ENCODE measurements at regions of chr9 and their contacts with region 1.

Region 1: DNA sequence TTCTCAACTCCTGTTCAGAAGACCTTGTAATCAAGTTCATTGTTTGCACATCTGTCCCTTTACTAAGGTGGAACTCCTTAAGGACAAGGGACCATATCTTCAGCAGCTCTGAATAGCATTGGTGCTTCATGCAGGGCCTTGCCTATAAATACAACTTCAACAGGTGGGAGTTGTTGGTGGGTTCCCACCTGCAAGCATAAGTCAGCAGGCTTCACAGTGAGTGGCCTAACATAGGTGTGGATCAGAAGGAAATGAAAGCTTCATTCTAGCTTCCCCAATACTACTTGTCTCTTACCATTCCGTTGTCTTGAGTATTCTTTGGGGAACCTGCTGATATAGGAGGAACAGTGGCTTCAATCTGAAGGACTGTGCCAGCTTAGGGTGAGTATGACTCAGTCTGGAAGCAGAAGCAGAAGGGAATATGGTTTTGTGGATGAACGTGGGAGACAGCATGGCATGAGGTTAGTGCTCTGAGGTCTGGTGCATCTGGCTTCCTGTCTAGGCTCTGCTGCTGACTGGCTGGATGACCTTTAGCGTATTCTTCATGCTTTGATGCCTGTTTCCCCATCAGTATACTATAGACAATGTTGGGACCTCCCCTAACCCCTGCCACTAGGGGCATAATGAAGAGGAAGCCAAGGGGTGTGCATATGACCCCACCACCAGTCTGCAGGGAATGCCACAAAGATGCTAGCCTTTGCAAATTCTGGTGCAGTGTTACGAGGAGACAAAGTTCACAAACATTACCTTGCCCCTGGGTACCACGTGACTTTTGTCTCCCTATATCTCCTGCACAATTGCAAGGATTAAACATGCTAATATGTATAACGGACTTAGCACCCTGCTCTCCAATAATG is 192.3 kb downstream of the PALM2AKAP2 start:
- DNase-seq: peak; percentile 47
- ATAC-seq: peak; percentile 33
- H3K4me3 Mint-ChIP-seq: no peak overlapping the region
- H3K27ac Mint-ChIP-seq: peak overlapping the region; percentile 75
- H3K4me1 Mint-ChIP-seq: peaks cover 90% of the 10 kb centered on the region
- H3K27me3 Mint-ChIP-seq: no peaks in the 10 kb centered on the region

Region 2: GRCh38 chr9:109887079-109887478 is 85.2 kb before region 1 on chr9:
- CTCF ChIA-PET with region 1: interaction called, 3 read pairs
- POLR2A ChIA-PET with region 1: no interaction called
- intact Hi-C with region 1: loop called (anchors 1 to 2 kb)
- DNase-seq: no peak
- ATAC-seq: peak; percentile 48
- H3K4me3 Mint-ChIP-seq: no peak overlapping the region
- H3K27ac Mint-ChIP-seq: peak overlapping the region; percentile 88
- H3K4me1 Mint-ChIP-seq: peaks cover 45% of the 10 kb centered on the region
- H3K27me3 Mint-ChIP-seq: no peaks in the 10 kb centered on the region

Region 3: DNA sequence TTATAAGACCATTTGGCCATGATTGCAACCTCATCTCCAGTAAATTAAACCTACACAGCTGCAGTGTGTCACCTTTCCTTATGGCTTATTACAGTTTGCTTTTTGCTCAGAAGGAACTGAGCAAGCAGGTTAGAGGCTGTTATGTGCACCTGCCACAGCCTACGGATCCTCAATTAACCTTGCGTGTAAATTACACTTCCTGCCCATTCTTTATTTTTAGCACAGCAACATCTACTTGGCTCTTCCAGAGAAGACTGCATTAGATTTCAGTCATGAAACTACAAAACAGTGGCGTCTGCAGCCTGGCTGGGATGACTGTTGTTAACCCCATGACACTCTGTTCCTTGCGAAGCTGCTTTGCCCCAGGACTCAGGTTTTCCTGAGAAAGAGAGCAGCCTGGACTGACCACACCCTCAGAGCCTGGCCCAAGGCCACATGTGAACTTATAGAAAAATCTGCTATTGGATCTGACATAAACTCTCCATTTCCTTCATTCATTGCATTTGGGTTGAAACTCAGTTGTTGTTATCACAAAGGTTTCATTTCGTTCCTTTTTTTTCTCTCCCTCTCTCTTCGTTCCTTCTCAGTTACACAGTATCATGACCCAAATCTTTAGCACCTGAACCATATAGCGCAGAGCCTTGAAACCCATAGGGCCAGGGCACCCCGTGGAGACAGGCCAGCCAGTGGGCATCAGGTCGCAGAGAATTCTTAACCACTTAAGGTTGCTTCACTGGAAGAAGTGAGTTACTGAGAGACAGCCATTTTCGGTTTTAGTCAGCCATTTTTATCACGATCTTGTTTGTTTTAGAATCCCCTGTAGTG is 53.7 kb before region 1 on chr9:
- CTCF ChIA-PET with region 1: interaction called, 4 read pairs
- POLR2A ChIA-PET with region 1: interaction called, 4 read pairs
- intact Hi-C with region 1: loop called (anchors 1 kb)
- DNase-seq: peak; percentile 65
- ATAC-seq: peak; percentile 87
- H3K4me3 Mint-ChIP-seq: peak overlapping the region; percentile 58
- H3K27ac Mint-ChIP-seq: peak overlapping the region; percentile 99
- H3K4me1 Mint-ChIP-seq: peaks cover 34% of the 10 kb centered on the region
- H3K27me3 Mint-ChIP-seq: no peaks in the 10 kb centered on the region

Region 4: DNA sequence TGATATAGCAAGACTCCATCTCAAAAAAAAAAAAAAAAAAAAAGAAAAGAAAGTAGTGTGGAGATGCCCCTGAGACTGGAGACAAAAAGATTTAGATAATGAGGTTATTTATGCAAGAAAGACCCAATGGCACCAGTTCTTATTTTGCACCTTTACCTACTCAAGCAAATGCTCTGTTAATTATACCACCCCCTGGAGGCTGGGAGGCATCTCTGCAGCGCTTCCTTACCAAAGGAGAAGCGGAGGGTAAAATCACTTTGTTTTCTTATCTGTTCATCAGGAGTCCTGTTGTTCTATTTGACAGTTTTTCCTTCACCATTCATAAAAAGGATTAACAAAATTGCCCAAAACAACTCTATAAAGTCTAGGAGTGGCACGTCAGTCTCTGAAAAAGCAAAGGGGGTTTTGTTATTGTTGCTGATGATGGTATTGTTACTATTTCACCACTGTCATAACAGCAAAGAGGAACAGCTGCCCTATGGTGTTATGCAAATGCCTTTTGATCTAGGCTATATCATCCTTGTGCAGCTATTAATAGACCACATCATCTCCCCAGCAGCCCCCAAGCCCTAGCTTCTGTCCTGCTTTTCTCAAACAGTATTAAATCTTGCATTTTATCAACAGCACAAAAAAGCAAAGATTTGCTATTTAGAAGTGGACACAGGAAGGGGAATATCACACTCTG is 18.3 kb before region 1 on chr9:
- CTCF ChIA-PET with region 1: interaction called, 17 read pairs
- POLR2A ChIA-PET with region 1: interaction called, 6 read pairs
- intact Hi-C with region 1: loop called (anchors 1 kb)
- DNase-seq: no peak
- ATAC-seq: no peak
- H3K4me3 Mint-ChIP-seq: no peak overlapping the region
- H3K27ac Mint-ChIP-seq: no peak overlapping the region
- H3K4me1 Mint-ChIP-seq: peaks cover 44% of the 10 kb centered on the region
- H3K27me3 Mint-ChIP-seq: peaks cover 5% of the 10 kb centered on the region

Region 5: GRCh38 chr9:110021891-110022290 is 49.6 kb after region 1 on chr9:
- CTCF ChIA-PET with region 1: no interaction called
- POLR2A ChIA-PET with region 1: no interaction called
- intact Hi-C with region 1: no loop called
- DNase-seq: no peak
- ATAC-seq: peak; percentile 99
- H3K4me3 Mint-ChIP-seq: no peak overlapping the region
- H3K27ac Mint-ChIP-seq: no peak overlapping the region
- H3K4me1 Mint-ChIP-seq: peaks cover 10% of the 10 kb centered on the region
- H3K27me3 Mint-ChIP-seq: no peaks in the 10 kb centered on the region

Region 6: GRCh38 chr9:111483862-111484571 is 1511.8 kb after region 1 on chr9 and contains the start of gene ECPAS:
- CTCF ChIA-PET with region 1: no interaction called
- POLR2A ChIA-PET with region 1: no interaction called
- intact Hi-C with region 1: loop called in 1 of 2 experiments (anchors 10 kb)
- DNase-seq: peak; percentile 83
- ATAC-seq: peak; percentile 79
- H3K4me3 Mint-ChIP-seq: peak within 1 kb of the TSS; percentile 81
- H3K27ac Mint-ChIP-seq: peak within 1 kb of the TSS; percentile 89
- H3K4me1 Mint-ChIP-seq: peaks cover 28% of the 10 kb centered on the region
- H3K27me3 Mint-ChIP-seq: no peaks in the 10 kb centered on the region
- total RNA-seq, gene ECPAS: 78.4 to 127 TPM

Measured in activated CD4-positive, alpha-beta T cell treated with anti-CD3 and anti-CD28 coated beads for 36 hours (primary cell).